IMR-90 (cell line): ENCODE measurements at regions of chr19 and their contacts with region 1.

Region 1: GRCh38 chr19:15379083-15379995 is at the start of gene AKAP8:
- DNase-seq: peak; percentile 98
- ATAC-seq: peak; percentile 89
- H3K4me3 ChIP-seq: peak within 1 kb of the TSS; percentile 92
- H3K27ac ChIP-seq: peak within 1 kb of the TSS; percentile 96
- H3K4me1 ChIP-seq: peaks cover 12% of the 10 kb centered on the region
- H3K27me3 ChIP-seq: no peaks in the 10 kb centered on the region
- CTCF ChIP-seq: no peak
- POLR2A ChIP-seq: peak; percentile 83
- RAD21 ChIP-seq: no peak
- total RNA-seq, gene AKAP8: 12.2 and 16.9 TPM in 2 replicates

Region 2: GRCh38 chr19:15101479-15102082 is 277.8 kb before region 1 on chr19:
- CTCF ChIA-PET with region 1: no interaction called
- POLR2A ChIA-PET with region 1: no interaction called
- dilution Hi-C with region 1: no loop called
- in situ Hi-C with region 1: no loop called
- intact Hi-C with region 1: loop called (anchors 10 kb)
- DNase-seq: peak; percentile 56
- ATAC-seq: peak; percentile 85
- H3K4me3 ChIP-seq: no peak overlapping the region
- H3K27ac ChIP-seq: no peak overlapping the region
- H3K4me1 ChIP-seq: peaks cover under 1% of the 10 kb centered on the region; the same call in 1 of the 2 replicates
- H3K27me3 ChIP-seq: peaks cover 3% of the 10 kb centered on the region
- CTCF ChIP-seq: peak; percentile 68
- POLR2A ChIP-seq: no peak
- RAD21 ChIP-seq: peak; percentile 68

Region 3: DNA sequence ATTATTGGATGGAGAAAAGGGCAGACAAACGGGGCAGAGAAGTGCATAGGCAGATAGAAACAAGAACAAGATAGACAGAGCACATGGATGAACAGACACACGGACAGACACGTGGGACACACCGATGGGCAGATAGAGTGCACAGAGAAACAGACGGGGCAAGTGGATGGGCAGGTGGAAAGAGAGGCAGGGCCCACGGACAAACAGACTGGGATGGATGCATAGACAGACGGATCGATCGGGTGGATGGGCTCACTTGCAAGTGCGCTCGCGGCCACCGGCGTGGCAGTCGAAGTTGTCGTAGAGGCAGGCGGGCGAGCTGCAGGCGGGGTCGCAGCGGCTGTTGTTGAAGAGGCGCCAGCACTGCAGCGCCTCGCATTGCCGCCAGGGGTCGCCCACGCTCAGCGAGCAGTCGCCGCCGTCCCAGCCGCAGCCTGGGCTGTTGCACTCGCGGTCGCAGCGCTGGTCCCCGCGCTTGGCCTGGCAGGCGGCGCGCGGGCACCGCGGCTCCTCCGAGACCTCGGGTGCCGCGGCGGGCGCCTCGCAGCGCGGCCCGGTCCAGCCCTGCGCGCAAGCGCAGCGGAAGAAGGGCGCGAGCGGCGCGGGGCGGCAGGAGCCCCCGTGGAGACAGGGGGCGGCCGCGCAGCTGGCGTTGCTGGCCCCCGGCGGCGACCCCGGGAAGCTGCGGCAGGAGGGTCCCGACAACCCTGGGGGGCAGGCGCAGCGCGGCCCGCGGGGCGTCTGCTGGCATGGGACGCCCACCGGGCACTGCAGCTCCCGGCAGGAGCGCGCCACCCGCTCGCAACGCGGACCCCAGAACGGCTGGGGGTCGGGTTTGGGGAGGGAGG is 201.8 kb before region 1 on chr19:
- CTCF ChIA-PET with region 1: no interaction called
- POLR2A ChIA-PET with region 1: no interaction called
- dilution Hi-C with region 1: no loop called
- in situ Hi-C with region 1: no loop called
- intact Hi-C with region 1: loop called (anchors 2 kb)
- DNase-seq: peak; percentile 64
- ATAC-seq: peak; percentile 99
- H3K4me3 ChIP-seq: no peak overlapping the region
- H3K27ac ChIP-seq: no peak overlapping the region
- H3K4me1 ChIP-seq: peaks cover 2% of the 10 kb centered on the region; the same call in 1 of the 2 replicates
- H3K27me3 ChIP-seq: no peaks in the 10 kb centered on the region
- CTCF ChIP-seq: peak; percentile 98
- POLR2A ChIP-seq: no peak
- RAD21 ChIP-seq: peak; percentile 97

Region 4: DNA sequence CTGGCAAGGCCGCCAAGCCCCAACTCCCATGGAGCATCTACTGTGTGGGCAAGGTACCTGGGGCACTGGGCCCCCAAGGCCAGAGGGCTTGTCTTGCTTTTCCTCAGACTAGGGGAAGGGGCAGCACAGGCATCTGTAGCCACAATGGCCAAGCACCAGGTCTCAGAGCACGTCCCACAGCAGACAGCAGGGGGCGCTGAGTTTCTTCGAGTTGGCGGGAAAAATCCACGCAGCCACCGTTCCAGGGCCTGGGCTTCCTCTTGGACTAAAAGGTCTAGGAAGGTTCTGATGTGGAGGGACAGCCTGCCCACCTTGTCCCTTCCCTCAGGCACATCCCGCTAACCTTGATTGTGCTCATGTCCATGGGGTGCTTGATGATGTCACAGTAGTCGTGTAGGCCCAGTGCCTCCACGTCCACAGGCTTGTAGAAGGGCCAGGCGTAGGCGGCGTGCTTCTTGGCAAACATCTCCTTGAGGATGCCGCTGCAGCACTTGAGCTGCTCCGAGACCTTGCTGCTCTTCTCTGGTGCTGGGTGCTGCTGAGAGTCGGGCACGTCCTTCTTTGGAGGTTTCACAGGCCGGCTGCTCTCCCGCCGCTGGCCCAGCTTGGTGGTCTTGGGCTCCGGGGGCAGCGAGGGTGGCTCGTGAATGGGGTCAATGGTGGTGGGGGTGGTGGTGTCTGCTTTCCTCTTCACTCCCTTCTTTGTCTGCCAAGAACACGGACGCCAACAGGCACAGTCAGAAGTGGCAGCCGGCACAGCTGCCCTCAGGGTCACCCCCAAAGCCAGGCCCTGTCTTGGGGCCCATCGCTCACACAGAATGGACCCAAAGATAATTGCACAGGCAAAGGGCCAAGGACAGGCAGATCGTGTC is 115.0 kb before region 1 on chr19:
- CTCF ChIA-PET with region 1: no interaction called
- POLR2A ChIA-PET with region 1: no interaction called
- dilution Hi-C with region 1: no loop called
- in situ Hi-C with region 1: no loop called
- intact Hi-C with region 1: loop called (anchors 1 kb)
- DNase-seq: peak; percentile 65
- ATAC-seq: peak; percentile 38
- H3K4me3 ChIP-seq: no peak overlapping the region
- H3K27ac ChIP-seq: peak overlapping the region; percentile 7; the same call in 1 of the 2 replicates
- H3K4me1 ChIP-seq: peaks cover 31% of the 10 kb centered on the region
- H3K27me3 ChIP-seq: no peaks in the 10 kb centered on the region
- CTCF ChIP-seq: peak; percentile 68
- POLR2A ChIP-seq: no peak
- RAD21 ChIP-seq: peak; percentile 78

Region 5: GRCh38 chr19:15418588-15419412 is 39.5 kb after region 1 on chr19 and contains the start of gene AKAP8L:
- CTCF ChIA-PET with region 1: no interaction called
- POLR2A ChIA-PET with region 1: interaction called, 3 read pairs
- dilution Hi-C with region 1: no loop called
- in situ Hi-C with region 1: no loop called
- intact Hi-C with region 1: loop called (anchors 2 kb)
- DNase-seq: peak; percentile 100
- ATAC-seq: peak; percentile 95
- H3K4me3 ChIP-seq: peak within 1 kb of the TSS; percentile 69
- H3K27ac ChIP-seq: peak within 1 kb of the TSS; percentile 85
- H3K4me1 ChIP-seq: peaks cover 13% of the 10 kb centered on the region
- H3K27me3 ChIP-seq: no peaks in the 10 kb centered on the region
- CTCF ChIP-seq: peak; percentile 71
- POLR2A ChIP-seq: peak; percentile 90
- RAD21 ChIP-seq: peak; percentile 65
- total RNA-seq, gene AKAP8L: 40.8 and 44.6 TPM in 2 replicates

Region 6: GRCh38 chr19:15544283-15544682 is 164.9 kb after region 1 on chr19:
- CTCF ChIA-PET with region 1: no interaction called
- POLR2A ChIA-PET with region 1: no interaction called
- dilution Hi-C with region 1: no loop called
- in situ Hi-C with region 1: no loop called
- intact Hi-C with region 1: no loop called
- DNase-seq: no peak
- ATAC-seq: no peak
- H3K4me3 ChIP-seq: no peak overlapping the region
- H3K27ac ChIP-seq: no peak overlapping the region
- H3K4me1 ChIP-seq: no peaks in the 10 kb centered on the region
- H3K27me3 ChIP-seq: no peaks in the 10 kb centered on the region
- CTCF ChIP-seq: no peak
- POLR2A ChIP-seq: no peak
- RAD21 ChIP-seq: no peak